ENCODE measurements at regions of chr20 and their contacts with region 1.

Region 1: DNA sequence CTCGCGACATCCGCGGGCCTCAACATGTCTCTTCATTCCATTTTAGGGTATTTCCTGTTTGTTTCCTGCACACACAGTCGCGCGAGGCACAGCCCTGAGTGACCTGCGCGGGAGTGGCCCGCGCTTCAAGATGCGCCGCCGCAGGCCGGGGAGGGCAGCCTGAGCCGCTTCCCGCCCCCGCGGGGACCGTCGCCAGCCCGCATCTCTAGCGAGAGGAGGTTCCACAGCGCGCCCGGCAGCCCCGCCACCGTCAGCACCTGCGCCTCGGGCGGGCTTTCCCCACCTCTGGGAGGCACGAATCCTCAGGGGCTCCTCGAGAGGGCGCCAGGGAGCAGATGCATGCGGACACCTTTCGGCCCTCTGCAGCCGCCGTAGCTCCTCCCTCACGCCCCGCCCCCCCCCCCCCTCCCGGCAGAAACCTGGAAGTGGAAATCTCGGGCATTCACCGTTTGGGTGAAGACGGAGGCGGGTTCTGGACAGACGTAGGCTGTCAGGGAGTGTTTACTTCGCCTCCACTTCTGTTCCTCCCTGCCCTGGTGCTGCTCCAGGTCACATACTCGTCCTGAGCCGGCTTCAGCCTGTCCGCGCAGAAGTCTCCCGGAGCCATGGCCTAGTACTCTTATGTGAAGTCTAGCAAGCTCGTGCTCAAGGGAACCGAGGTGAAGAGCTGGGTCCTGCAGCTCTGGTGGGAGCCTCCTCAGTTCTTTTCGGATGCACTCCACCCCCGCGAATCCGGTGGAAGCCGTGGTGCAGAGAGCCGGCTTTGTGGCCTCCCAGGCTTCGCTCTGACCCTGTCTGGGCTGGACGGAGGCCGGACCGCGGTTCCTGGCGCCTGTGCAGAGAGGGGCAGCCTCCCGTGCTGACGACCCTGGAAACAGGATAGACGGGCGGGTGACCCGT is 880.4 kb upstream of the DEFB115 start:
- DNase-seq: peak; percentile 92 to 94
- ATAC-seq: peak; percentile 91 to 97 (median 94)
- H3K4me3 ChIP-seq: peak overlapping the region; percentile 89
- H3K4me3 Mint-ChIP-seq: peak overlapping the region; percentile 92
- H3K27ac ChIP-seq: peak overlapping the region; percentile 80
- H3K27ac Mint-ChIP-seq: peak overlapping the region; percentile 91 to 93
- H3K4me1 ChIP-seq: peaks cover 6% of the 10 kb centered on the region
- H3K4me1 Mint-ChIP-seq: peaks cover 35 to 39% of the 10 kb centered on the region in 2 donors
- H3K27me3 ChIP-seq: no peaks in the 10 kb centered on the region
- H3K27me3 Mint-ChIP-seq: peaks cover 0 to 3% of the 10 kb centered on the region in 2 donors
- CTCF ChIP-seq: peak; percentile 80

Region 2: DNA sequence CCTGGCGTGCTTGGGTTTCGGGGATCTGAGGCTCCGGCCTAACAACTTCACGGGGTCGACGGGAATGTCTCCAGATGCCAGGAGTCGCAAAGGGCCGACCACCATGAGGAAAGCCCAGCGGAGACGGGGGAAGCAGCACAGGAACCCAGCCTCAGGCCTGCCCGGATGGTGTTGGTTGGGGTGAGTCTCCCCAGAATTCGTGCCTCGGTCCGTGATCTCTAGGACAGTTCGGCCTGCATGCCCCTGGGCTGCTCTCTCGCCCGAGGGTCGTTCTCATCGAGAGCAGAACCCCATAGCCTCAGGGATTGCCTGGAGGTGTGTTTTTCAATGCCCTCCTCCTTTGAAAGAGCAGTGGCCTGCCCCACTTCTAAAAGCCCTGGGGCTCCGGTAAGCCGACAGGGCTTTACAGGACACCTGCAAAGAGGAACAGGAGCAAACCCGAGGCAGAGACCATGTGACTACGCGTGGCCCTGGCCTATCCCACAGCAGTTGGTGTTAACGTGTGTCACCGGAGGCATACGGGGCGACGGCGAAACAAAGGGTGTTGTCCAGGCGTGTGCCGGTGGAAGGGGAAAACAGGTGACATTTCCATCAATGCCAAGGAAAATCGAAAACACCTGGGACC is 92.6 kb before region 1 on chr20:
- intact Hi-C with region 1: loop called (anchors 5 kb)
- DNase-seq: no peak
- ATAC-seq: peak in 2 of 3 donors; percentile 10 to 24
- H3K4me3 ChIP-seq: peak overlapping the region; percentile 18
- H3K4me3 Mint-ChIP-seq: peak overlapping the region; percentile 84
- H3K27ac ChIP-seq: peak overlapping the region; percentile 50
- H3K27ac Mint-ChIP-seq: peak overlapping the region; percentile 80 to 99
- H3K4me1 ChIP-seq: peaks cover 49% of the 10 kb centered on the region
- H3K4me1 Mint-ChIP-seq: peaks cover 36 to 78% of the 10 kb centered on the region in 2 donors
- H3K27me3 ChIP-seq: no peaks in the 10 kb centered on the region
- H3K27me3 Mint-ChIP-seq: no peaks in the 10 kb centered on the region
- CTCF ChIP-seq: no peak

Measured in natural killer cell (primary cell).